CD4-positive, alpha-beta memory T cell (primary cell): ENCODE measurements at regions of chr16 and their contacts with region 1.

Region 1: DNA sequence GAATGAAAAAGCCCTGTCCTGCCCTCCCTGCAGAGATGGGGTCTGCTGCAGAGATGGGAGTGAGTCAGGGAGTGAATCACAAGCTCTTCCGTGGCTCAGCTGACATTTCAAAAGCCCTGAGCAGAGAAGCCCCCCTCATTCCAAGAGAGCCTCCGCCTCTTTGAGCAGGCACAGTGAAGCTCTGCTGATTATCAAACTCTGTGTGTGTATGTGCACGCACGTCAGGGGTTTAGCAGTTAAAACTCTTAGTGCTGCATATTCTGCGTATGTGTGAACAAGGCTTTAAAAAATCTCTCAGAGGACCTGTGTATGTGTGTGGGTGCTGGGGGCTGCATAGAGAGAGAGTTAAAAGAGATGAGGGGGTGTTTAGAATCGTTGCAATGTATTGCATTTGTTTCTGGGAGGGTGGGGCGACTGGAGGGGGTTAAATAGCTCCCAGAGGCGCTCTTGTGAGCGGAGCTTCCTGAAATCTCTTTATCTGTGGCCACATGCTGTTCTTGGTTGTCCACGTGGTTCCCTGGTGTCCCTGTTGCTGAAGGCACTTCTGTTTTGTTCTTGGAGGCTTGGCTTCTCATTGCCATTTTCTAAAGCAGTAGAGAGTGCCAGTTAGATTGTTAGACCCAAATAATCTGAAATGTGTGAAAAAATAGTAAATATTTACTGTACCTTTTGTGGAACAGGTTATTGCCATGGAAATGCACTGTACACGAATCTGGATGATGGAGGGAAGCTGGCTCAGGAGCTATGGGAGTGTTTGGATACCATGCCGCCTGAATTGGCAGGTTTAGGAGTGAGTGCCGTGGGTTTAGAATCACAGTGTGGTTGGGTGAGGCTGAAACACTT is 116.6 kb downstream of the PRKCB start:
- DNase-seq: peak in 1 of 5 donors; percentile 13
- H3K4me3 ChIP-seq: no peak overlapping the region
- H3K4me3 Mint-ChIP-seq: peak overlapping the region in 7 of 8 donors; percentile 52 to 81 (median 57)
- H3K27ac ChIP-seq: peak overlapping the region; percentile 21
- H3K27ac Mint-ChIP-seq: peak overlapping the region; percentile 83 to 96 (median 91)
- H3K4me1 ChIP-seq: peaks cover 93% of the 10 kb centered on the region
- H3K4me1 Mint-ChIP-seq: peaks cover 67 to 91% (median 80%) of the 10 kb centered on the region in 4 donors
- H3K27me3 ChIP-seq: no peaks in the 10 kb centered on the region
- H3K27me3 Mint-ChIP-seq: no peaks in the 10 kb centered on the region

Region 2: DNA sequence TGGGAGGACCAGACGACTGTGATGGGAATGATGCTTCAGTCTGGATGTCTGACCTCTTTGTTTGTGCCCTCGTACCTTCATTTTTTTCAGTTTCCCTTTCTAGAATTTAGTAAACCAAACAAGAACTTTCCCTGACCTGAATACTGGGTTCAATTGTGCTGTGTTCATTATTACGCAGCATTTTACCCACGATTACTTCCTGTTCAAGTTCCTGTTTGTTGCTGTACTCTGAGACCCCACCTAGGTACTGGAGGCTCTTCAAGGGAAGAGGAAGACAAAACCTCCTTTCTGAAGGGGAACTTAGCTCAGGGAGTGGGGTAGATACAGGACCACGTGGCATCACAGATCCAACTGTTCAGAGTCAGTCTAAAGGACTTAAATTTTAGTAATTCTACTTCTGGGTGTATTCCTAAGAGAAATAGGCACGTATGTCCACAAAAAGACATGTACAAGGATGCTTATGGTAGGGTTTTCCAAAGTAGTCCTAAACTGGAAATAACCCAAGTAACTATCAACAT is 125.8 kb before region 1 on chr16:
- CTCF ChIA-PET with region 1: no interaction called
- POLR2A ChIA-PET with region 1: interaction called, 21 read pairs
- intact Hi-C with region 1: no loop called
- DNase-seq: peak; percentile 58 to 78 (median 73)
- H3K4me3 ChIP-seq: peak overlapping the region; percentile 0 to 20
- H3K4me3 Mint-ChIP-seq: peak overlapping the region; percentile 55 to 84 (median 65)
- H3K27ac ChIP-seq: peak overlapping the region; percentile 36
- H3K27ac Mint-ChIP-seq: peak overlapping the region; percentile 88 to 97 (median 89)
- H3K4me1 ChIP-seq: peaks cover 40% of the 10 kb centered on the region
- H3K4me1 Mint-ChIP-seq: peaks cover 30 to 44% (median 36%) of the 10 kb centered on the region in 4 donors
- H3K27me3 ChIP-seq: no peaks in the 10 kb centered on the region
- H3K27me3 Mint-ChIP-seq: no peaks in the 10 kb centered on the region

Region 3: DNA sequence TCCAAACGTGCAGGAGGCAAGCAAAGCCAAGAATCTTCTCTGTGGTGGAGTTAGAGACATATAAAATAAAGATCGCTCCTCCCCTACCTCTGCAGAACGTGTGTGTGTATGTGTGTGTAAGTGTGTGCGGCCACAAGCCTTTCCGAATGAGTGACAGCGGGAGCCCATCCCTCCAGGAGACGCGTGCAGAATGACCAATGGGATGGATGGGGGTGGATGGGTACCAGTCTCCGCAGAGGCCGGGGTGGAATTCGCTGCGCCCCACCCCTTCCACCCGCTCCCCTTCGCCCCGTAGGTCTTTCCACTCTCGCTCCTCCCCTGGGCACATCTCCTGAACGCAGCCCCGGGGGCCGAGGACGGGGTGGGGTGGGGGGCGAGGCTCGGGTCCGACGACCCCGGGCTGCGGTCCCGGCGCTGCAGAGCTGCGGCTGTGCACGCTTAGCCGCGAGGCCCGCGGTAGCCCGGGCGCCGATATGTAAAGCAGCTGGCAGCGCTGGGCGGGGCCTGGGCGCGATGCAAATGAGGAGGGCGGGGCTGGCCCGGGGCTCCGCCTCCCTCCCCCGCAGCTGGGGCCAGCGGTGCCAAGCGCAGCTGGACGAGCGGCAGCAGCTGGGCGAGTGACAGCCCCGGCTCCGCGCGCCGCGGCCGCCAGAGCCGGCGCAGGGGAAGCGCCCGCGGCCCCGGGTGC is 116.8 kb before region 1 on chr16 and contains the start of gene PRKCB:
- CTCF ChIA-PET with region 1: interaction called, 5 read pairs
- POLR2A ChIA-PET with region 1: interaction called, 7 read pairs
- intact Hi-C with region 1: loop called (anchors 2 kb)
- DNase-seq: peak; percentile 89 to 91 (median 90)
- H3K4me3 ChIP-seq: peak within 1 kb of the TSS; percentile 62 to 68
- H3K4me3 Mint-ChIP-seq: peak within 1 kb of the TSS; percentile 97 to 100 (median 99)
- H3K27ac ChIP-seq: peak within 1 kb of the TSS; percentile 57
- H3K27ac Mint-ChIP-seq: peak within 1 kb of the TSS; percentile 90 to 96 (median 92)
- H3K4me1 ChIP-seq: peaks cover 62% of the 10 kb centered on the region
- H3K4me1 Mint-ChIP-seq: peaks cover 48 to 67% (median 54%) of the 10 kb centered on the region in 4 donors
- H3K27me3 ChIP-seq: no peaks in the 10 kb centered on the region
- H3K27me3 Mint-ChIP-seq: no peaks in the 10 kb centered on the region
- total RNA-seq, gene PRKCB: 98.1 to 106 TPM

Region 4: DNA sequence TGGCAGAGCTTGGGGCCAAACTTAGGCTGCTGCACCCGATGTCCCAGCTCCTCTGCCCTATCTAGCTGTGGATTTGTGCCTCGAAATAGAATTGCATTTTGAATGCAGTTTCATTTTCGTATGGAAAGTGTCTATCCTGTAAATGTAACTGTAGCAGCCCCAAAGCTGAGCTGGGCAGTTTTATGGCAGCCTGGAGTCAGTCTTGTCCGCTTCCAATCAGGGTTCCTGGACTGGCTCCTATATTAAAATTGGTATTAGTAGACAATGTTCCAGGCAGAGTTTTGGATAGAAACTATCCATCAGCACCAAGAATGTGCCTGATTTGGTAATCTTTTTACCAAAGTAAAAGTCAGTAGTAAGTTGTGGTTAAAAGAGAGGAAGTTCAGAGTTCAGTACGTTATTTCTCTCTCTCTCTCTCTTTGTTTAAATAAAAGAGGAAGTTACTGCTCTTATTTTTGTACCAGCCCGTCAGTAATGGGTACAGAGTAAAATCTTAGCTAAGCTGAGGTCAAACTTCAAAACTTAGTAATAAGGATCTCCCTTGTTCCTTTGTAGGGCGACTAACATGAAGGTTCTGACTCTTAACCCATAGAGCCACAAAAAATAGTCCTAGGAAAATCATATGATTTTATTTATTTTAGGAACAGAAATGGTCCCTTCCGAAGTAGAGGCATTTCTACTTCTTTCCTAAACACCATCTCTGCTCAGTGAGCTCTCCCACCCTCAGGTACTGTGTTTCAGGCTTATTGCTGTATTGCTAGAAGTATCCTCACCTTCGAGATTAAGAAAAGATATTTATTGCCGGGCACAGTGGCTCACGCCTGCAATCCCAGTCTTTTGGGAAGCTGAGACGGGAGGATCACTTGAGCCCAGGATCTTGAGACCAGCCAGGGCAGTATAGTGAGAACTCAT is 88.6 kb before region 1 on chr16:
- CTCF ChIA-PET with region 1: no interaction called
- POLR2A ChIA-PET with region 1: interaction called, 14 read pairs
- intact Hi-C with region 1: no loop called
- DNase-seq: peak; percentile 48 to 70 (median 62)
- H3K4me3 ChIP-seq: peak overlapping the region; percentile 48 to 71
- H3K4me3 Mint-ChIP-seq: peak overlapping the region; percentile 84 to 94 (median 90)
- H3K27ac ChIP-seq: peak overlapping the region; percentile 43
- H3K27ac Mint-ChIP-seq: peak overlapping the region; percentile 86 to 96 (median 88)
- H3K4me1 ChIP-seq: peaks cover 80% of the 10 kb centered on the region
- H3K4me1 Mint-ChIP-seq: peaks cover 59 to 88% (median 77%) of the 10 kb centered on the region in 4 donors
- H3K27me3 ChIP-seq: no peaks in the 10 kb centered on the region
- H3K27me3 Mint-ChIP-seq: no peaks in the 10 kb centered on the region

Region 5: GRCh38 chr16:23877107-23878090 is 75.0 kb before region 1 on chr16:
- CTCF ChIA-PET with region 1: interaction called, 9 read pairs
- POLR2A ChIA-PET with region 1: interaction called, 4 read pairs
- intact Hi-C with region 1: loop called (anchors 5 kb)
- DNase-seq: peak in 2 of 5 donors; percentile 17 to 24
- H3K4me3 ChIP-seq: no peak overlapping the region
- H3K4me3 Mint-ChIP-seq: no peak overlapping the region
- H3K27ac ChIP-seq: no peak overlapping the region
- H3K27ac Mint-ChIP-seq: peak overlapping the region in 5 of 7 donors; percentile 11 to 65 (median 50)
- H3K4me1 ChIP-seq: peaks cover 62% of the 10 kb centered on the region
- H3K4me1 Mint-ChIP-seq: peaks cover 45 to 73% (median 56%) of the 10 kb centered on the region in 4 donors
- H3K27me3 ChIP-seq: no peaks in the 10 kb centered on the region
- H3K27me3 Mint-ChIP-seq: no peaks in the 10 kb centered on the region

Region 6: GRCh38 chr16:23893986-23894385 is 58.4 kb before region 1 on chr16:
- CTCF ChIA-PET with region 1: no interaction called
- POLR2A ChIA-PET with region 1: interaction called, 5 read pairs
- intact Hi-C with region 1: loop called (anchors 5 kb)
- DNase-seq: no peak
- H3K4me3 ChIP-seq: no peak overlapping the region
- H3K4me3 Mint-ChIP-seq: no peak overlapping the region
- H3K27ac ChIP-seq: no peak overlapping the region
- H3K27ac Mint-ChIP-seq: no peak overlapping the region
- H3K4me1 ChIP-seq: peaks cover 28% of the 10 kb centered on the region
- H3K4me1 Mint-ChIP-seq: peaks cover 42 to 73% (median 57%) of the 10 kb centered on the region in 4 donors
- H3K27me3 ChIP-seq: no peaks in the 10 kb centered on the region
- H3K27me3 Mint-ChIP-seq: no peaks in the 10 kb centered on the region